PC-3 (cell line): ENCODE measurements at regions of chr18 and their contacts with region 1.

Region 1: GRCh38 chr18:74291771-74292540 is at the start of gene CYB5A:
- DNase-seq: peak; percentile 94
- ATAC-seq: peak; percentile 85
- H3K4me3 ChIP-seq: peak within 1 kb of the TSS; percentile 91
- H3K27ac ChIP-seq: no peak within 1 kb of the TSS
- H3K4me1 ChIP-seq: peaks cover 32% of the 10 kb centered on the region
- H3K27me3 ChIP-seq: no peaks in the 10 kb centered on the region
- CTCF ChIP-seq: no peak
- total RNA-seq, gene CYB5A: 98.0 and 130 TPM in 2 replicates

Region 2: DNA sequence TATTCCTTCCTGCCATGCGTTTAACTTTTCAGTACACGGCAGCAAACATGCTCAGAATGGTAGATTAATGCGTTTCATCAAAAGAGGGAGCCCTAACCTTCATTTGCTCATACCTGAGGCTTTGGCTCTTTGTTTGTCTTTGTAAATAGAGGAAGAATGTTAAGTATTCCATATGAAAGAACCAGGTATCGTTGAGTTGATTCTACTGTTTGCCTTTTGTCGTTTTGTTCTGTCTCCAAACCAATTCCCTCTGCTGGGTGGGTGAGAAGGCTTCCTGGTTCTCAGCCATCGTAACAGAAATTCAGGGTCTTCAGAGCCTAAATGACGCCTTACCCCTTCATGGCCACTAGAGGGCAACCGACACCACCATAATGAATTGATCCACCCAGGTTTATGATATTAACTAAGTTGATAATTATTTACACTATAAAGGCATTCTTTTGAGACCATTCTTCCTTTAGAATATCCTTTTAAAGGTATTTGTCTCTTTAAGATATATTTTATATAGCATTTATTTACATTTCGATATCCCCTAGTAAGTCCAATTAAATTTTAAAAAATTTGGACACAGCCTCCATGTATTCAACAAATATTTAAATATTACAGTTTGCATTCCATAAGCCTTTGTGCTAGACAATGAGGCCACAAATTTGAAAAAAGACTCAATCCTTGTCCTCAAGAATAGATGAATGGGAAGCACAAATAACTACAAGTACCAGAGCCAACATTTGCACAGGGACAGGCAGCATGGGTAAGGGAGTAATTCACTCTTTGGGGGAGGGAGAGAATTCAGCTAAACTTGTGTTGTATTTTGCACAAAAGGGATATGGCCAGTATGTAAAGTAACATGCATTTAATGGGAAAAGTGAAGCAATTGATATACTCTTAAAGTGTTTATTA is 95.5 kb before region 1 on chr18:
- CTCF ChIA-PET with region 1: no interaction called
- POLR2A ChIA-PET with region 1: no interaction called
- intact Hi-C with region 1: loop called (anchors 1 kb)
- DNase-seq: peak; percentile 75
- ATAC-seq: peak; percentile 90
- H3K4me3 ChIP-seq: peak overlapping the region; percentile 67
- H3K27ac ChIP-seq: no peak overlapping the region
- H3K4me1 ChIP-seq: no peaks in the 10 kb centered on the region
- H3K27me3 ChIP-seq: no peaks in the 10 kb centered on the region
- CTCF ChIP-seq: peak; percentile 96

Region 3: DNA sequence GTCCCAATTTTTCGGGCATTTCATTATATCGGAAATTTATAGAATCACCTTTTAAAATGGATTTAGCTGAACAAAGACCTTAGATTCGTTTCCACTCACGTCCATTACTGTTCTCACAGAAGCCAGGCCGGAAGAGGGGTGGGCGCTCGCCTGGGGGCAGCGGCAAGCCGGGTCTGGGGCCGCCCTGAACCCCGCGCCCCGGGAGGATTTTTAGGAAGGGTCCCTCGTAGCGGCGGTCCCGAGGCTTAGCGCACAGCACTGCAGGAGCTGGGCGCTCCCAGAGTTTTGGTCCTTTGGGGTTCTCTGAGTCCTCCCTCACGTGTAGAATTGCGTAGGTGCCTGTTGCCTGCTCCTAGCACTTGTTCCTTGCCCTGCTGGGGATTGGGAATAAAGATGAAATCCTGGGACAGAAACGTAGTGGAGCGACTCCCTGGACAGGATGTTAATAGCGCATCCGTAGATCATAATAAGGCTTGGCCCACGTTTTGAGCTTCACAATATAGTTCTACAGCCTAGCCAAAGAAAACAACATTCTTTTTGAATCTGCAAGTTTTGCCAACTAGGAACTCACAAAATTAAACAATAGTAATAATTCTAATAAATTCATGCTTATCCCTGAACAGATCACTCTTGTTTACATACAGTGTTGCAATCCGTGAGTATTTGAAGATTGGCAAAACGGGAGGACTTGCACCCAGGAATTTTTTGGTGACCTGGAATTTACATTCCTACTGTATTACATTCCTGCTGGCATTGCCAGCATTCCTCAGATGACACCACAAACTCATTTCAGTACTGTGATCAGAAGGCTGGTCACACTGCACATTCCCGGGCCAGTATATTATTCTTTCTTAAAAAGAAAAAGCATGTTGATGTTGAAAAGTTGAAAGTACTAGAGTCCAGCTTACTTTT is 24.6 kb after region 1 on chr18:
- CTCF ChIA-PET with region 1: interaction called, 5 read pairs
- POLR2A ChIA-PET with region 1: no interaction called
- intact Hi-C with region 1: loop called (anchors 2 kb)
- DNase-seq: peak; percentile 95
- ATAC-seq: peak; percentile 95
- H3K4me3 ChIP-seq: peak overlapping the region; percentile 24; the same call in 1 of the 2 replicates
- H3K27ac ChIP-seq: peak overlapping the region; percentile 26; the same call in 1 of the 2 replicates
- H3K4me1 ChIP-seq: peaks cover 23% of the 10 kb centered on the region
- H3K27me3 ChIP-seq: no peaks in the 10 kb centered on the region
- CTCF ChIP-seq: no peak

Region 4: DNA sequence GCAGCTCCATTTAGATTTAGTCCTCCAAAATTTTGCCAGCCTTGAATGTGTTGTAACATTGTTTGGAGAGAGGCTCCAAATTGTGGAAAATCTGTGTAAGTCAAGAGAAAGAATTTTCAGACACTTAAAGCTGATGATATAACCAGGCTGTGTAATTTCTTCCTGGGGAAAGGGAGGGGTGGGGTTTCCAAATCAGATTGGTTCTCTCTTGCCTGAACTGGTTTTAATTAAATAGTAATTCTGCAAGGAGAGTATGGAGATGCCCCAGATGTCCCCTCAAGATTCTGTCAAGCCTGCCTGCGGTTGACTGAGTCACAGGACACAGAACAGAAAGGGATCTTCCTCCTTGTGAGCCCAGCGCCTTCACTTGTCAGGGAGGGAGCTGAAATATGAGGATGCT is 78.2 kb after region 1 on chr18:
- CTCF ChIA-PET with region 1: no interaction called
- POLR2A ChIA-PET with region 1: no interaction called
- intact Hi-C with region 1: no loop called
- DNase-seq: no peak
- ATAC-seq: no peak
- H3K4me3 ChIP-seq: no peak overlapping the region
- H3K27ac ChIP-seq: no peak overlapping the region
- H3K4me1 ChIP-seq: no peaks in the 10 kb centered on the region
- H3K27me3 ChIP-seq: peaks cover 58% of the 10 kb centered on the region
- CTCF ChIP-seq: no peak

Region 5: DNA sequence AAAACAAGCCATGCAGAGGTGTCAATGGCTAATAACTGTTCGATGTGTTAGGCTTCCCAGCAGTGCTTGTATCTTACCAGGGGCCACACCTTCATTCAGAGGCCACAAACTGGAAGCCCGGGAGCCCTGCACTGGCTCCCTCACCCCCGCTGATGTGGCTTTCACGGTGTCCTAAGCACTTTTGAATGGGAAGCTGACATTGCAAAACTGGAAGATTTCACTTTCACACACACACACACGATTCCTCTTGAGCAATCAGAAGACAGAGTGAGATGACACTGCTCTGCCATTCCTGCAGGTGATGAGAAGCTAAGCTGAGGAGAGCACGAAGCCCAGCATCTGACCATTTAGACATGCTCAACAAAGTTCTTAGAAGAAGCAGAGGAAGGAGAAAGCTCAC is 297.1 kb after region 1 on chr18:
- CTCF ChIA-PET with region 1: no interaction called
- POLR2A ChIA-PET with region 1: no interaction called
- intact Hi-C with region 1: no loop called
- DNase-seq: no peak
- ATAC-seq: no peak
- H3K4me3 ChIP-seq: no peak overlapping the region
- H3K27ac ChIP-seq: no peak overlapping the region
- H3K4me1 ChIP-seq: no peaks in the 10 kb centered on the region
- H3K27me3 ChIP-seq: peaks cover 46% of the 10 kb centered on the region
- CTCF ChIP-seq: no peak